Right ventricle myocardium inferior (tissue), 1 donor: ENCODE measurements at regions of chr19 and their contacts with region 1.

Region 1: GRCh38 chr19:41426952-41427646 is at the start of gene B3GNT8:
- DNase-seq: peak; percentile 95
- ATAC-seq: peak; percentile 90
- total RNA-seq, gene B3GNT8: 8.3 TPM

Region 2: GRCh38 chr19:41321600-41322270 is 105.4 kb before region 1 on chr19:
- intact Hi-C with region 1: loop called (anchors 5 kb)
- DNase-seq: peak; percentile 76
- ATAC-seq: no peak

Region 3: DNA sequence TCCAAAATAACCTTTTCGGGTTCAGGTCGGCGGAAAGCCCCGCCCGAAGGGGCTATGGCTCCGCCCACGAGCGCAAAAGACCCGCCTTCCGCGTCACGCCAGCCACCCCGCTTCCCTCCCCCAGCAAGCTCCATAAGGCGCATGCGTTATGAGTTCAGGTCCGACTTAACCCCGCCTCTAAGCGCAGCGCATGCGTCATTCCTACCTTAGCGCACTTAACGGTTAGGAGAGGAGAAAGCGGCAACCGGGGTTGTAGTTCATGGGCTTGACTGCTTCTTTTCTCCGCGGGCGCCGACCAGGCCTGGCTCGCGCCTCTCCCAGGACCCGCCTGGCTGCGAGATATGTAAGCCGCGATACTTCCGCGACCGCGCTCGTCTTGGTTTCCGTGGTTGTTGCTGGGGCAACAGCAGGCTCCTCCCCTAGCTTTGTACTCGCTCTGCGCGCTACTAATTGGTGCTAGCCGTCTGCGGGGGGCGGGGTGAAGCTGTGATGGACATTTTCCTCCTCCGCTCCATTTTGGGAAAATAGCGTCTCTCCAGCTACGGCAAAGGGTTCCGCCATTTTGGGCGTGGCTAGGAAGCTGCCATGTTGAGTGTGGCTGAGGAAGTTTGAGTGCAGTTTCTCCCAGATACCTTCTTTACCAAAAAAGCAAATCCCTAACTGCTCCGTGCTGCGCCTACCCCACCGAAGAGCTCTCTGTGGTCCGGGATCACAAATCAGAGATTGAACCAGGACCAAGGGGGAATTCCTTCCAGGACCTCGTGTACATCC is 63.2 kb before region 1 on chr19 and contains the start of gene B9D2:
- intact Hi-C with region 1: loop called (anchors 2 kb)
- DNase-seq: peak; percentile 98
- ATAC-seq: peak; percentile 97
- total RNA-seq, gene B9D2: 3.2 TPM

Region 4: DNA sequence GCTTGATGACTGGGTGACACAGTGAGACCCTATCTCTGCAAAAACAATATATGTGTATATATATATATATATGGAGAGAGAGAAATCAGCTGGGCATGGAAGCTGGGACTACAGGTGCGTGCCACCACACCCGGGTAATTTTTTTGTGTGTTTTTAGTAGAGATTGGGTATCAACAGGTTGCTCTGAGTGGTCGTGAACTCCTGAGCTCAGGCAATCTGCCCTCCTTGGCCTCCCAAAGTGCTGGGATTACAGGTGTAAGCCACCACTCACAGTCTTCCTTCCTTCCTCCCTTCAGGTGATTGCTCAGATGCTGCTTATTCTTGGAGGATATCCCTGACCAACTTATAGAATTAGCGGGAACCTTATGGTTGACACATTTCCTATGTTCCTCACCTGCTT is 57.7 kb after region 1 on chr19:
- intact Hi-C with region 1: no loop called
- DNase-seq: no peak
- ATAC-seq: no peak